Gastrocnemius medialis (tissue), 4 donors: ENCODE measurements at regions of chr4 and their contacts with region 1.

Region 1: DNA sequence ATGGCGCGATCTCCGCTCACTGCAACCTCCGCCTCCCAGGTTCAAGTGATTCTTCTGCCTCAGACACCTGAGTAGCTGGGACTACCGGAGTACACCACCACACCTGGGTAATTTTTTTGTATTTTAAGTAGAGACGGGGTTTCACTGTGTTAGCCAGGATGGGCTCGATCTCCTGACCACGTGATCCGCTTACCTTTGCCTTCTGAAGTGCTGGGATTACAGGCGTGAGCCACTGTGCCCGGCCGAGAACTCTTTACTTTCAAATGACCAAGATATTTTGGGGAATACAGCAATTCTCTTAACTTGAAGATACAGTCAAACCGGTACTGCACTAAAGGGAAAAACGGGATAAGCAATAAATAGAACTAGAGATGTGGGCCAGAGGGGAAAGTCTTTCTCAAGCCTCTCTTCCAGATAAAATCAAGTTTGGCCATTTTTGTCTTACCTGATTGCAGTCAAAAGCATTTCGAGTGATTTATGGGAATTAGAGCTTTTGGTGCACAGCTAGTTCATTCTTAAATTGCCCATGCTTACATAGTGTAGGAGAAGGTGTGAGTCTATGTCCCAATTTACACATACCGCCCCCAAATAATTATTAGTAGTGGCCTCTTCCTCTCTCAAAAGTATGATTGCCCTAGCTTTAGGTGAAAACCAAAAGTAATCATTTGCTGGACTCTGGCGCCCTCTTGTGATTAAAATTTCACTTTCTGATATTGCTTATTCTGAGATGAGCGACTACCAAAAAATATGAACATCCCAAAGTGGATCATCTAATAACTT is 53.2 kb upstream of the ABCG2 start:
- DNase-seq: no peak
- ATAC-seq: peak in 1 of 2 donors; percentile 78
- H3K4me3 ChIP-seq: no peak overlapping the region
- H3K27ac ChIP-seq: no peak overlapping the region
- H3K4me1 ChIP-seq: no peaks in the 10 kb centered on the region
- H3K27me3 ChIP-seq: no peaks in the 10 kb centered on the region
- CTCF ChIP-seq: peak; percentile 66 to 76 (median 73)
- POLR2A ChIP-seq: no peak

Region 2: DNA sequence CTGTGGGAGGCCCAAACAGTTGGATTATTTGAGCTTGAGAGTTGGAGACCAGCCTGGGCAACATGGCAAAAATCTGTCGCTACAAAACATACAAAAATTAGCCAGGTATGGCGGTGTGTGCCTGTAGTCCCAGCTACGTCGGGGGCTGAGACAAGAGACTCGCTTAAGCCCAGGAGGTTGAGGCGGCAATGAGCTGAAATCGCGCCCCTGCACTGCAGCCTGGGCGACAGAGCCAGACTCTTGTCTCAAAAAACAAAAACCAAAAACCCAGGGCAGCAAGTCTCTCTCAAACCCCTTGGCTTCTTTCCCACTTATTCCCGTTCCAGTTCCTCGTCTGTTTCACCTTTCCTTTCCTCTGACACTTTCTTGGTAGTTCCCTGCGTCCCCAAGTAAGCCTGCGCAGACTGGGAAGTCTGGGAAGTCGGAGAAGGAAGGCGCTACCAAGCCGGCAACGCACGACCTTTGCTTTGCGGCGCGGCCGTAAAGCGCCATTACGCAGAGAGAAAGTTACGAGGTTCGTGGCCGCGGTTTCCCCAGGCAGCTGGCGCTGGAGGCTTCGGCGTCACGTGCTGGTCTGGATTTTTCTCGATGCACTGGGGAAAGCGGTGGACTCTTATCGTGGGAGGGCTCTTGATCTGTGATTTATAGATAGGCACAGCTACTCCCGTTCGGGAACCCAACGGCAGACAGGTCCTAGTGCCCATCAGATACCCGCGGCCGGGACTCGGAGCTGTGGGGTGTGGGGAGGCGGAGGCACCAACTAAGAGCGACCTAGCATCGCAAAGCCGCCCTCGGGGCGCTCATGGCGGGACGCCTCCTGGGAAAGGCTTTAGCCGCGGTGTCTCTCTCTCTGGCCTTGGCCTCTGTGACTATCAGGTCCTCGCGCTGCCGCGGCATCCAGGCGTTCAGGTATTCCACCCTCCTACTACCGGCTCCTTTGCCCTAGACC is 789.3 kb before region 1 on chr4 and contains the start of gene NUDT9:
- in situ Hi-C with region 1: no loop called
- intact Hi-C with region 1: no loop called
- DNase-seq: peak; percentile 93 to 96
- ATAC-seq: peak; percentile 98
- H3K4me3 ChIP-seq: peak within 1 kb of the TSS; percentile 60 to 93 (median 66)
- H3K27ac ChIP-seq: peak within 1 kb of the TSS; percentile 88 to 94 (median 92)
- H3K4me1 ChIP-seq: peaks cover 15 to 23% of the 10 kb centered on the region in 2 donors
- H3K27me3 ChIP-seq: no peaks in the 10 kb centered on the region
- CTCF ChIP-seq: peak in 1 of 5 experiments; percentile 7
- POLR2A ChIP-seq: peak; percentile 66 to 73
- total RNA-seq, gene NUDT9: 13.4 to 16.7 (median 15.8) TPM

Region 3: DNA sequence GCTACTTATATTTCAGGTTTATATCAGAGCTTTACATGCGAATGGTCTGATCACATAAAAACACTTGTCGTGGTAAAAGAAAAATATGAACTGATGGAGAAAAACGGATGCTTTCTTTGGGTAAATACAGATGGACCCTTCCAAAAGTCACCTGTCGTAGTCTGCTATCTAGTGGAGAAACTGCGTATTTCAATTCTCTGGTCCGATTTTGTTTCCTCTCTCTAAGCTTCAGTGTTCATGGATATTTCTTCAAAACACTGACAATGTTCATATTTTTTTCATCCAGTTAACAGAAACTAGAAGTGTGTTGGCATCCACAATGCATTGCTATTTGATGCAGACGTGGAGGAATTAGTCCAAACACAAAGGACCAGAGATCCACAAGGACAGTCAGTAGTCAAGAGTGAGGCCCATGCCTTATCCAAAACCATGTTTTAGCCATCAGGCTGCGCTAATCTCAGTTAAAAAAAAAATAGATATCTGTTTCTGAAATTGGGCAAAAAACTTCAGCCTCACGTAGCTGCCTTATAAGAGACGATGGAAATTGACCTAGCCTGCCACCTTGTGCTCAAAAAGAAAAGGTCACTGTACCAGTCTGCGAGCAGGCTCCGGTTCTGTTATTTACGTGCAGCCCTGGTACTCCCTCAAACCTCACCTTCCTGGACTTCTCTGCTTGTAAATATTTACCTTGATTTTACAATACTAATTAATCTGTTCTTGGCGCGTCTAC is 362.9 kb before region 1 on chr4:
- in situ Hi-C with region 1: loop called in 3 of 4 experiments (anchors 5 to 10 kb)
- intact Hi-C with region 1: loop called (anchors 2 kb)
- DNase-seq: peak in 1 of 2 donors; percentile 18
- ATAC-seq: peak; percentile 75 to 80
- H3K4me3 ChIP-seq: peak overlapping the region in 3 of 4 donors; percentile 4 to 30 (median 28)
- H3K27ac ChIP-seq: peak overlapping the region in 3 of 4 donors; percentile 15 to 36 (median 34)
- H3K4me1 ChIP-seq: peaks cover 7 to 8% of the 10 kb centered on the region in 2 donors
- H3K27me3 ChIP-seq: no peaks in the 10 kb centered on the region
- CTCF ChIP-seq: peak; percentile 23 to 62 (median 48)
- POLR2A ChIP-seq: no peak

Region 4: DNA sequence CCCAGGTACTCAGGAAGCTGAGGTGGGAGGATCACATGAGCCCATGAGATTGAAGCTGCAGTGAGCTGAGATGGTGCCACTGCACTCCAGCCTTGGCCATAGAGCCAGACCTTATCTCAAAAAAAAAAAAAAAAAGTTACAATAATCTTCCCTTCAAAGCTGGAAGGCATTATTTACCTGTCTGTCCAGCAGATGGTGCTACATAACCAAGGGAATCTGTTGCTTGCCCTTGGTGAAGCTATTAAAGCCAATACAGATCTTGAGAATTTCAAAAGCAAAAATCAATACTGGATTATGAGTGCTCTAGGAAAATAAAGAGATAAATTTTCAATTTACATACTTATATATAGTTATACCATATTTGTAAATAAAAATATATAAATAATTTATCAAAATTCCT is 178.4 kb before region 1 on chr4:
- in situ Hi-C with region 1: loop called (anchors 5 kb)
- intact Hi-C with region 1: loop called (anchors 1 kb)
- DNase-seq: no peak
- ATAC-seq: peak in 1 of 2 donors; percentile 64
- H3K4me3 ChIP-seq: no peak overlapping the region
- H3K27ac ChIP-seq: no peak overlapping the region
- H3K4me1 ChIP-seq: no peaks in the 10 kb centered on the region
- H3K27me3 ChIP-seq: no peaks in the 10 kb centered on the region
- CTCF ChIP-seq: peak in 4 of 5 experiments; percentile 24 to 70 (median 56)
- POLR2A ChIP-seq: no peak

Region 5: DNA sequence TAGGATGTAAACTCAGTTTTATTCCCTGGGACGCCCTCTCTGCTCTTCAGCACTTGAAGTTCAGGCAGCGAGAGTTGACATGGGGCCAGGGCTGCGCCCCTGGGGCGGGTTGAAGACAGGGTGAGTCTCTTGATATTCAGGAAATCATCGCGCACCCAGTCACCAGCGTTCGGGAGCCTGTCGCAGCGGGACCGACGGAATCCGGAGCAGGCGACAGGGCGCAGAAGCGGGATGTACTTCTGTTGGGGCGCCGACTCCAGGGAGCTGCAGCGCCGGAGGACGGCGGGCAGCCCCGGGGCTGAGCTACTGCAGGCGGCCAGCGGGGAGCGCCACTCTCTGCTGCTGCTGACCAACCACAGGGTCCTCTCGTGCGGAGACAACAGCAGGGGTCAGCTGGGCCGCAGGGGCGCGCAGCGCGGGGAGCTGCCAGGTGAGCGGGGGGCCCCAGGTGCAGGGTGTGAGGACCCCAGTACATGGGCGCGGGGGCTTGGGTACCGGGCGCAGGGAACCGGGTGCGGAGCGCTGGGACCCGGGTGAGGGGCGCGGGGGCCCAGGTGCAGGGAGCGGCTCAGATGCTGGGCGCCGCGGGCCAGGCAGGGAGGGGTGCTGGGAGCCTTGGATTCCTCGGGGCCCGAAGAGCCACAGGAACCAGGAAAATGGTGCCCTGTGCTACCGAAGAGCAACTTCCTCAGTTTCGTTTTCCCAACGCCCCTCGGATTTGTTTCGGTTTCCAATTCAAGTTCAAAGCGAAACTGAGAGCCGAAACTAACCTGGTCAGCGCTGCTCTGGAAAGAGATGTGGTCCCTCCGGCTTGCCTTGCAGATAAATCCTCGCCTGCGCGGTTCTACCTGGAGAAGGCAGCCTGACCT is 167.3 kb after region 1 on chr4 and contains the start of gene HERC6:
- in situ Hi-C with region 1: no loop called
- intact Hi-C with region 1: loop called (anchors 5 kb)
- DNase-seq: peak; percentile 25 to 59
- ATAC-seq: peak; percentile 90 to 92
- H3K4me3 ChIP-seq: peak within 1 kb of the TSS; percentile 81 to 99 (median 96)
- H3K27ac ChIP-seq: peak within 1 kb of the TSS; percentile 71 to 88 (median 81)
- H3K4me1 ChIP-seq: no peaks in the 10 kb centered on the region
- H3K27me3 ChIP-seq: no peaks in the 10 kb centered on the region
- CTCF ChIP-seq: peak; percentile 47 to 77 (median 60)
- POLR2A ChIP-seq: no peak
- total RNA-seq, gene HERC6: 0.42 to 1.6 (median 1.0) TPM

Region 6: DNA sequence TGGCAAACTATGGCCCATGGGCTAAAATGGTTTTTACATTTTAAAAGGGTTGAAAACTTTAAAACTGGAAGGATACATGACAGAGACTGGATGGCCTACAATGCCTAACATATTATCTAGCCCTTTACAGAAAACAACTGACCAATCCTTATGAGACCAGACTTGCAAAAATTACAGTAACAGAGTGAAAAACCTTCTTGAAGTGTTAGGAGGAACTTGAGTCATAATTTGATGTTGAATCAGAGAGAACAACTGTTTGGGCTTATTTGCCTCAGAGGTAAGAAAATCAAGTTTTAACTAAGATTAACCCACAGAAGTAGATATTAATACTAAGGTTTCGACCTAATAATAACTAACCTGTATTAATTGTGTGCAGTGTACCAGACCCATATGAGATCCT is 498.3 kb after region 1 on chr4:
- in situ Hi-C with region 1: no loop called
- intact Hi-C with region 1: no loop called
- DNase-seq: no peak
- ATAC-seq: no peak
- H3K4me3 ChIP-seq: no peak overlapping the region
- H3K27ac ChIP-seq: no peak overlapping the region
- H3K4me1 ChIP-seq: peaks cover 11 to 22% of the 10 kb centered on the region in 2 donors
- H3K27me3 ChIP-seq: no peaks in the 10 kb centered on the region
- CTCF ChIP-seq: no peak
- POLR2A ChIP-seq: no peak